ENCODE measurements at regions of chr15 and their contacts with region 1.

Region 1: DNA sequence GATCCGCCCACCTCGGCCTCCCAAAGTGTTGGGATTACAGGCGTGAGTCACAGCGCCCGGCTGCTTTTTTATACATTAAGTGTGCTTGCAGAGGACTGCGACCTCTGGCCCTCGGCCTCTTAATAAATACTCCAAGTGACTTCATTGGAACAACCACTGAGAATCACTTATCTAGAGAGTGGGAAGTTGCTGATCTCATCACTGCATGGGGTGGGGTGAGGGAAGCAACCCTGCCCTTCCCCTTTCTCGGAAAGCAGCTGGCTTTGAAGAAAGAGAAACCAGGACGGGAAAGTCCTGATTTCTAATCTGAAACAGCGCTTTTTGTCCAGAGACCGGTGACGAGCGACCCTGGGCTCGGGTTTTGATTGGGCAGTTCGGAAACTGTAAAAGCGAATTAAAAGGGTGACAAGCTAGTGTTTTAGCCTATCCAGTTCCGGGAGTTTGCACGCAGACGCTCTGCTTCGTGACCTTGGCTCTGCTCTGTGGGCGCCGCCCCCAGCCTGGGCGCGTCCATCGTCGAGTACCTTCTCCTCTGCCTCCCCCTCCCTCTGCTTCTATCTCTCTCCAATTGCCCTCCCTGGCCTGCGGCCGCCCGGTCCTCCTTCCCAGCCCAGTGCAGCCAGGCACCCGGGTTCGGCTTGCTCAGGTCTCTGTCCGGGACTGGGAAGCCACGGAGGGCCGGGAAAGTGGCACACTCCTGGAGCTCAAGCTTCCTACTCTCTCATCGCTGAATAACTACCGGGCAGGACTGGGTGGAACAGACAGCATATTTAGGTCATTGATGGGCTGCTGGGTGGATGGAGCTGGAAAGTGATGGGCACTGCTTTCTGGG is 7.5 kb upstream of the TRIM69 start:
- DNase-seq: peak; percentile 98
- H3K4me3 Mint-ChIP-seq: peak overlapping the region; percentile 94
- H3K27ac Mint-ChIP-seq: peak overlapping the region; percentile 89
- H3K4me1 Mint-ChIP-seq: peaks cover 20% of the 10 kb centered on the region
- H3K27me3 Mint-ChIP-seq: no peaks in the 10 kb centered on the region
- CTCF ChIP-seq: no peak

Region 2: GRCh38 chr15:44370830-44371229 is 358.0 kb before region 1 on chr15:
- CTCF ChIA-PET with region 1: no interaction called
- POLR2A ChIA-PET with region 1: no interaction called
- intact Hi-C with region 1: no loop called
- DNase-seq: no peak
- H3K4me3 Mint-ChIP-seq: no peak overlapping the region
- H3K27ac Mint-ChIP-seq: no peak overlapping the region
- H3K4me1 Mint-ChIP-seq: no peaks in the 10 kb centered on the region
- H3K27me3 Mint-ChIP-seq: no peaks in the 10 kb centered on the region
- CTCF ChIP-seq: no peak

Region 3: GRCh38 chr15:44536962-44537734 is 191.6 kb before region 1 on chr15 and contains the start of gene EIF3J:
- CTCF ChIA-PET with region 1: no interaction called
- POLR2A ChIA-PET with region 1: interaction called, 12 read pairs
- intact Hi-C with region 1: no loop called
- DNase-seq: peak; percentile 96
- H3K4me3 Mint-ChIP-seq: peak within 1 kb of the TSS; percentile 82
- H3K27ac Mint-ChIP-seq: peak within 1 kb of the TSS; percentile 97
- H3K4me1 Mint-ChIP-seq: peaks cover 34% of the 10 kb centered on the region
- H3K27me3 Mint-ChIP-seq: no peaks in the 10 kb centered on the region
- CTCF ChIP-seq: no peak
- total RNA-seq, gene EIF3J: 165 and 213 TPM in 2 replicates

Region 4: DNA sequence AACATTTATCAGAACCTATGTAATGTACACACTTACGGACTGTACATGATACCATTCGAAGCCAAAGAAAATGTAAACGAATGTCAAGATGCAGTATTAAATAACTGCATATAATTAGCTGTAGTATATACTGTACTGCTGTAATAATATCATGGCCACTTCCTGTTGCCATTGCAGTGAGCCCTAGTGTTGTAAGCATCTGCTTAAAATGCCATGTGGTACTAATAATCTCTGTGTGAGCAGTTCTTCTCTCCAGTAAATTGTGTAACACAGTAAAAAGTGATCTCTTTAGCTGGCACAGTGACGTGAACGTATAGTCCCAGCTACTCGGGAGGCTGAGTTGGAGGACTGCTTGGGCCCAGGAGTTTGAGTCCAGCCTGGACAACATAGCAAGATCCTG is 73.9 kb before region 1 on chr15:
- CTCF ChIA-PET with region 1: no interaction called
- POLR2A ChIA-PET with region 1: interaction called, 21 read pairs
- intact Hi-C with region 1: no loop called
- DNase-seq: no peak
- H3K4me3 Mint-ChIP-seq: no peak overlapping the region
- H3K27ac Mint-ChIP-seq: no peak overlapping the region
- H3K4me1 Mint-ChIP-seq: peaks cover 7% of the 10 kb centered on the region
- H3K27me3 Mint-ChIP-seq: no peaks in the 10 kb centered on the region
- CTCF ChIP-seq: no peak

Region 5: DNA sequence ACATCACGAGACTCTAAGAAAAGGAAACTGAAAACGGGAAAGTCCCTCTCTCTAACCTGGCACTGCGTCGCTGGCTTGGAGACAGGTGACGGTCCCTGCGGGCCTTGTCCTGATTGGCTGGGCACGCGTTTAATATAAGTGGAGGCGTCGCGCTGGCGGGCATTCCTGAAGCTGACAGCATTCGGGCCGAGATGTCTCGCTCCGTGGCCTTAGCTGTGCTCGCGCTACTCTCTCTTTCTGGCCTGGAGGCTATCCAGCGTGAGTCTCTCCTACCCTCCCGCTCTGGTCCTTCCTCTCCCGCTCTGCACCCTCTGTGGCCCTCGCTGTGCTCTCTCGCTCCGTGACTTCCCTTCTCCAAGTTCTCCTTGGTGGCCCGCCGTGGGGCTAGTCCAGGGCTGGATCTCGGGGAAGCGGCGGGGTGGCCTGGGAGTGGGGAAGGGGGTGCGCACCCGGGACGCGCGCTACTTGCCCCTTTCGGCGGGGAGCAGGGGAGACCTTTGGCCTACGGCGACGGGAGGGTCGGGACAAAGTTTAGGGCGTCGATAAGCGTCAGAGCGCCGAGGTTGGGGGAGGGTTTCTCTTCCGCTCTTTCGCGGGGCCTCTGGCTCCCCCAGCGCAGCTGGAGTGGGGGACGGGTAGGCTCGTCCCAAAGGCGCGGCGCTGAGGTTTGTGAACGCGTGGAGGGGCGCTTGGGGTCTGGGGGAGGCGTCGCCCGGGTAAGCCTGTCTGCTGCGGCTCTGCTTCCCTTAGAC is 17.3 kb before region 1 on chr15 and contains the start of gene B2M:
- CTCF ChIA-PET with region 1: interaction called, 7 read pairs
- POLR2A ChIA-PET with region 1: interaction called, 340 read pairs
- intact Hi-C with region 1: loop called (anchors 1 kb)
- DNase-seq: peak; percentile 98
- H3K4me3 Mint-ChIP-seq: peak within 1 kb of the TSS; percentile 92
- H3K27ac Mint-ChIP-seq: peak within 1 kb of the TSS; percentile 96
- H3K4me1 Mint-ChIP-seq: peaks cover 23% of the 10 kb centered on the region
- H3K27me3 Mint-ChIP-seq: no peaks in the 10 kb centered on the region
- CTCF ChIP-seq: no peak
- total RNA-seq, gene B2M: 605 and 755 TPM in 2 replicates

Region 6: GRCh38 chr15:45009046-45009445 is 280.3 kb after region 1 on chr15:
- CTCF ChIA-PET with region 1: no interaction called
- POLR2A ChIA-PET with region 1: no interaction called
- intact Hi-C with region 1: no loop called
- DNase-seq: no peak
- H3K4me3 Mint-ChIP-seq: no peak overlapping the region
- H3K27ac Mint-ChIP-seq: no peak overlapping the region
- H3K4me1 Mint-ChIP-seq: no peaks in the 10 kb centered on the region
- H3K27me3 Mint-ChIP-seq: no peaks in the 10 kb centered on the region
- CTCF ChIP-seq: no peak

Region 7: GRCh38 chr15:45212493-45212892 is 483.7 kb after region 1 on chr15:
- CTCF ChIA-PET with region 1: no interaction called
- POLR2A ChIA-PET with region 1: no interaction called
- intact Hi-C with region 1: no loop called
- DNase-seq: no peak
- H3K4me3 Mint-ChIP-seq: no peak overlapping the region
- H3K27ac Mint-ChIP-seq: no peak overlapping the region
- H3K4me1 Mint-ChIP-seq: no peaks in the 10 kb centered on the region
- H3K27me3 Mint-ChIP-seq: peaks cover 11% of the 10 kb centered on the region
- CTCF ChIP-seq: no peak

Measured in MCF 10A (cell line).